Natural killer cell (primary cell): ENCODE measurements at regions of chr7 and their contacts with region 1.

Region 1: GRCh38 chr7:29408841-29409243 is 154.8 kb upstream of the PRR15 start:
- DNase-seq: peak; percentile 26 to 81
- ATAC-seq: peak; percentile 68 to 82 (median 82)
- H3K4me3 ChIP-seq: no peak overlapping the region
- H3K4me3 Mint-ChIP-seq: no peak overlapping the region
- H3K27ac ChIP-seq: no peak overlapping the region
- H3K27ac Mint-ChIP-seq: no peak overlapping the region
- H3K4me1 ChIP-seq: no peaks in the 10 kb centered on the region
- H3K4me1 Mint-ChIP-seq: peaks cover 3 to 5% of the 10 kb centered on the region in 2 donors
- H3K27me3 ChIP-seq: no peaks in the 10 kb centered on the region
- H3K27me3 Mint-ChIP-seq: no peaks in the 10 kb centered on the region
- CTCF ChIP-seq: peak; percentile 81

Region 2: DNA sequence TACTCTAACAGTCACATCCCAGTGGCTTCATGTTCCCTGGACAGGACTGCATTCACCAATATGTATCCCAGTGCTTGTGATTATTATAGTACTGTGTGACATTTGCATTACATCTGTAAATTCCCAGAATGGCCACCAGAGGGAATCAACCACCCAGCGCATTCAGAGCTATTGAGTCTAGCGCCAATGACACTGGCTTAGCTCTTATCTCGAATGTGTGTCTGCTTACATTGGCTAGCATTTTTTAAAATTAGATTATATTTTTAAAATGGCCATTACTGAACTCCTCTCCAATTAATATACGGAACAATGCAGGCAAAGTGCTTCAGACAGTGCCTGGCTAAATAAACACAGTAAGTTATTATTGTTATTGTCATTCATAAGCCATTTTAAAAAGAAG is 487.0 kb before region 1 on chr7:
- intact Hi-C with region 1: loop called (anchors 1 kb)
- DNase-seq: peak in 1 of 2 donors; percentile 71
- ATAC-seq: peak; percentile 76 to 89 (median 88)
- H3K4me3 ChIP-seq: no peak overlapping the region
- H3K4me3 Mint-ChIP-seq: no peak overlapping the region
- H3K27ac ChIP-seq: no peak overlapping the region
- H3K27ac Mint-ChIP-seq: no peak overlapping the region
- H3K4me1 ChIP-seq: peaks cover 4% of the 10 kb centered on the region
- H3K4me1 Mint-ChIP-seq: peaks cover 15 to 16% of the 10 kb centered on the region in 2 donors
- H3K27me3 ChIP-seq: peaks cover 2% of the 10 kb centered on the region
- H3K27me3 Mint-ChIP-seq: peaks cover 11 to 13% of the 10 kb centered on the region in 2 donors
- CTCF ChIP-seq: peak; percentile 57

Region 3: DNA sequence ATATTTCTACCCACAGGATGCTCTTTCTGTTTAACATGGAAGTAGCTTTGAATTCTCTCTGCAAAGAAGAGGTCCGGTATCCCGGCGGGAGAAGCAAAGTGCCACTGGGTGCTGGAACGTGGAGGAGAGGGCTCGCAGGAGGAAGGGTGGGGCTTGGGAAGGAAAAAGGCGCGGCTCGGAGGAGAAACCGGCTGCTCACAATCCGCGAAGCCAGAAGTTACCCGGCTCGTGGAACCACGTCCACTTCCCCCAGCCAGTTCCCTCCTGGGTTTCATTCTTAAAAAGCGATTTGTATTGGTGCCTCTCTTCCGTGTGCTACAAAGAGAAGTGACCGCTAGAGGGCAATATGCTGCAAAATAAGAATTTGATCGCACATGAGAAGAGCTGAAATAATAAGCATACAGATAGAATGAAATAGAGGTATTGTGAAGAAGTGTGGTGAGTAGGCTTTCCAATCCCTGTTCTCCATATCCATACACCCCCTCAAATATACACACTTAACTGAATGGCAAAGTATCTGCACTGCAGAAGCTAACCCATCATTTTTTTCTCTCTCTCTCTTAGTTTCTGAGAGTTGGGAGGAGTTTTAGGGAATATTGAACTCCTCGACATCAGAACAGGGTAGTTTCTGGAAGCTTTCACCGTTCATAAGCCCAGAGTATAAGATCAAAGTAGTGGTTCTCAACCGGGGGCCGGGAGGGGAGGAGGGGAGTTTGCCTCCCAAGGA is 481.8 kb before region 1 on chr7:
- intact Hi-C with region 1: loop called (anchors 1 kb)
- DNase-seq: peak; percentile 22 to 82
- ATAC-seq: peak; percentile 91 to 94 (median 91)
- H3K4me3 ChIP-seq: peak overlapping the region; percentile 34
- H3K4me3 Mint-ChIP-seq: peak overlapping the region; percentile 88
- H3K27ac ChIP-seq: no peak overlapping the region
- H3K27ac Mint-ChIP-seq: peak overlapping the region in 1 of 2 donors; percentile 69
- H3K4me1 ChIP-seq: peaks cover 4% of the 10 kb centered on the region
- H3K4me1 Mint-ChIP-seq: peaks cover 20% of the 10 kb centered on the region in 2 donors
- H3K27me3 ChIP-seq: peaks cover 2% of the 10 kb centered on the region
- H3K27me3 Mint-ChIP-seq: peaks cover 7 to 20% of the 10 kb centered on the region in 2 donors
- CTCF ChIP-seq: peak; percentile 81

Region 4: GRCh38 chr7:29113384-29114103 is 295.3 kb before region 1 on chr7:
- intact Hi-C with region 1: loop called (anchors 5 kb)
- DNase-seq: peak in 1 of 2 donors; percentile 23
- ATAC-seq: peak in 2 of 3 donors; percentile 33 to 43
- H3K4me3 ChIP-seq: no peak overlapping the region
- H3K4me3 Mint-ChIP-seq: no peak overlapping the region
- H3K27ac ChIP-seq: no peak overlapping the region
- H3K27ac Mint-ChIP-seq: peak overlapping the region in 1 of 2 donors; percentile 3
- H3K4me1 ChIP-seq: peaks cover 7% of the 10 kb centered on the region
- H3K4me1 Mint-ChIP-seq: peaks cover 9 to 12% of the 10 kb centered on the region in 2 donors
- H3K27me3 ChIP-seq: no peaks in the 10 kb centered on the region
- H3K27me3 Mint-ChIP-seq: peaks cover 21 to 51% of the 10 kb centered on the region in 2 donors
- CTCF ChIP-seq: no peak

Region 5: GRCh38 chr7:29189743-29190201 is 219.1 kb before region 1 on chr7:
- intact Hi-C with region 1: loop called (anchors 1 kb)
- DNase-seq: peak; percentile 60 to 76
- ATAC-seq: peak; percentile 69 to 73 (median 70)
- H3K4me3 ChIP-seq: no peak overlapping the region
- H3K4me3 Mint-ChIP-seq: no peak overlapping the region
- H3K27ac ChIP-seq: no peak overlapping the region
- H3K27ac Mint-ChIP-seq: no peak overlapping the region
- H3K4me1 ChIP-seq: peaks cover 12% of the 10 kb centered on the region
- H3K4me1 Mint-ChIP-seq: peaks cover 9 to 18% of the 10 kb centered on the region in 2 donors
- H3K27me3 ChIP-seq: no peaks in the 10 kb centered on the region
- H3K27me3 Mint-ChIP-seq: peaks cover 5 to 10% of the 10 kb centered on the region in 2 donors
- CTCF ChIP-seq: peak; percentile 89

Region 6: DNA sequence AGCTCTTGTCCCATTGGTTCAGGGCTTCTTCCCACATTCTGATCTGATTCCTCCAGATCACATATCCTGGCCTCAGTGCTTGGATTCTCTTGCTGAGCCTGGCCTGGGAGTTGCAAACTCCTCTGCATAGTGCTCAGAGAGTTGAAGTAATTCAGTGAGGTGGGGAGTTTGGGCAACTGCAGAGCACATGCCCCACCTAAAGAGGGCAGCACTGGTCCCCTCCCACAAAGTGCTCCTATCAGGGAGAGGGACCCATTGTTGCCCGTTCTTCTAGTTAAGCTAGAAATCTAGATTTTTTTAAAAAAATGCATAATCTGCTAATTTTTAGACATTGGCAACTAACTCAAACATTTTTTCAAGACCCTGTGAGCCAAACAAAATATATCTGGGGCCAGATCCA is 169.2 kb before region 1 on chr7:
- intact Hi-C with region 1: loop called (anchors 5 kb)
- DNase-seq: peak in 1 of 2 donors; percentile 44
- ATAC-seq: no peak
- H3K4me3 ChIP-seq: no peak overlapping the region
- H3K4me3 Mint-ChIP-seq: no peak overlapping the region
- H3K27ac ChIP-seq: no peak overlapping the region
- H3K27ac Mint-ChIP-seq: no peak overlapping the region
- H3K4me1 ChIP-seq: peaks cover 7% of the 10 kb centered on the region
- H3K4me1 Mint-ChIP-seq: peaks cover 27 to 31% of the 10 kb centered on the region in 2 donors
- H3K27me3 ChIP-seq: no peaks in the 10 kb centered on the region
- H3K27me3 Mint-ChIP-seq: no peaks in the 10 kb centered on the region
- CTCF ChIP-seq: peak; percentile 32

Region 7: DNA sequence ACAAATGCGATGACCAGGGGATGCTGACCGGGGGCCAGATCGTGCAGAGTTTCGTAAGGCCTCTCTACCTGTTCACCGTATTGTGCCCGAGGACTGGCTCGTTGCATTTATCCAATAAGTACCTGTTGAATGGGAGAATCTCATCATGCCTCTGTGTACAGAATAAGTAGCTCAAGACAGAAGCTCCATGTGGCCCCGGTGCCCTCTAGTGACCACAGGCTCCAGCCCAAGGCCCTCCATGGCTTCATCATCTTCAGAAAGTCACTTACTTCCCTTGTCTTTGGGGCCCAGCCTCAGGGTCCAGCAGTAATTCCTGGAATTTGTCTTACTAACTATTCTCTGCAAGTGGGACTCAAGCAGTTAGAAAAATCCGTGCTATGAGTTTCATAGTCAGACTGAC is 63.2 kb before region 1 on chr7:
- intact Hi-C with region 1: loop called (anchors 5 kb)
- DNase-seq: peak; percentile 27 to 47
- ATAC-seq: peak; percentile 49 to 62 (median 55)
- H3K4me3 ChIP-seq: no peak overlapping the region
- H3K4me3 Mint-ChIP-seq: no peak overlapping the region
- H3K27ac ChIP-seq: no peak overlapping the region
- H3K27ac Mint-ChIP-seq: no peak overlapping the region
- H3K4me1 ChIP-seq: peaks cover 15% of the 10 kb centered on the region
- H3K4me1 Mint-ChIP-seq: peaks cover 0 to 7% of the 10 kb centered on the region in 2 donors
- H3K27me3 ChIP-seq: no peaks in the 10 kb centered on the region
- H3K27me3 Mint-ChIP-seq: no peaks in the 10 kb centered on the region
- CTCF ChIP-seq: no peak

Region 8: DNA sequence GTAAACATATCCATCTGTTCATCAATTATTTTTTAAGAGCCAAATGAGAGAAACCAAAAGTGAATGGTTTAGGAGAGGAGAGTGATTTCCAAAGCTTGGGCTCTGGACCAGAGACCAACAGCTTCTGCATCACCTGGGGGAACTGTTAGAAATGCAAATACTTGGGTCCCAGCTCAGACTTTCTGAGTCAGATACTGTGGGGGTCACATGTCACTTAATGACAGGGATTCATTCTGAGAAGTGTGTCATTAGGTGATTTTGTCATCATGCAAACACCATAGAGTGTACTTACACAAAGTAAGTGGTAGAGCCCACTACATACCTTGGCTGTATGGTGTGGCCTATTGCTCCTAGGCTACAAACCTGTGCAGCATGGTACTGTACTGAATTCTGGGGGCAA is 26.3 kb after region 1 on chr7:
- intact Hi-C with region 1: no loop called
- DNase-seq: no peak
- ATAC-seq: no peak
- H3K4me3 ChIP-seq: no peak overlapping the region
- H3K4me3 Mint-ChIP-seq: no peak overlapping the region
- H3K27ac ChIP-seq: no peak overlapping the region
- H3K27ac Mint-ChIP-seq: peak overlapping the region in 1 of 2 donors; percentile 16
- H3K4me1 ChIP-seq: no peaks in the 10 kb centered on the region
- H3K4me1 Mint-ChIP-seq: peaks cover 6 to 23% of the 10 kb centered on the region in 2 donors
- H3K27me3 ChIP-seq: no peaks in the 10 kb centered on the region
- H3K27me3 Mint-ChIP-seq: no peaks in the 10 kb centered on the region
- CTCF ChIP-seq: no peak